ENCODE measurements at regions of chr16 and their contacts with region 1.

Region 1: DNA sequence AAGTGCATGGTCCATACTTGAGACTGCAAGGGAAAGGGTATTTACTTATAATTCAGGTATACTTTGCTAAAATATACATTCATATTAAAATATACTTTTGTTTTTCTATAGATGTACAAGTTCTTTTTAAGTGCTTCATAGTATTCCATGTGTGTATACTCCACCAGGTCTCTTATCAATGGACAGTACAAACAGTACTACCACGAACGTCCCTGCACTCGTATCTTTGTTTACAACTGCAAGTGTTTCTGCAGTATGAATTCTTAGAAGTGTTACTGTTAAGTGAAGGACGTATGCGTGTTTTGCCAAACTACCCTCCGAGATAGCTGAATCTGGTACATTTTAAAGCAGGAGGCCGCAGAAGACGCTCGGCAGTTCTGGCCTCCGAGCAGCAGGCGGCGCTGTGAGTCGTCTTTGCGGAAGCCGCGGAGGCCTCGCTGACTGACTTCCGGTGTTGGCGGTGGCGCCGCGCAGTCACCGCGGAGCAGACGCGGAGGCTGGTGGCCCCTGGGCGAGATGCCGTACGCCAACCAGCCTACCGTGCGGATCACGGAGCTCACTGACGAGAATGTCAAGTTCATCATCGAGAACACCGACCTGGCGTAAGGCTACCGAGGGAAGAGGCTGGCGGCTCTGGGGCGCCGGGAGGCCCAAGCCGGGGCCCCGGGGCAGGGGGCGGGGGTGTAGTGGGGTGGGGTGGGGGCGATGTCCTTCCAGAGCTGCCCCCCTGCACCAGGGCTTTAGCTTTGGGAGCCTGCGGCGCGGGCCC is at the start of gene POLR2C:
- DNase-seq: peak; percentile 93 to 96 (median 96)
- H3K4me3 ChIP-seq: peak within 1 kb of the TSS; percentile 48 to 94 (median 83)
- H3K27ac ChIP-seq: peak within 1 kb of the TSS; percentile 35 to 81
- H3K4me1 ChIP-seq: peaks cover 3 to 11% (median 10%) of the 10 kb centered on the region in 4 experiments
- H3K27me3 ChIP-seq: no peaks in the 10 kb centered on the region

Region 2: GRCh38 chr16:57403965-57404817 is 58.2 kb before region 1 on chr16 and contains the start of gene CCL17:
- CTCF ChIA-PET with region 1: no interaction called
- POLR2A ChIA-PET with region 1: no interaction called
- DNase-seq: peak in 1 of 3 donors; percentile 21
- H3K4me3 ChIP-seq: no peak within 1 kb of the TSS
- H3K27ac ChIP-seq: no peak within 1 kb of the TSS
- H3K4me1 ChIP-seq: peaks cover 0 to 8% (median 3%) of the 10 kb centered on the region in 4 experiments
- H3K27me3 ChIP-seq: peaks cover 0 to 4% (median 2%) of the 10 kb centered on the region in 5 experiments

Region 3: DNA sequence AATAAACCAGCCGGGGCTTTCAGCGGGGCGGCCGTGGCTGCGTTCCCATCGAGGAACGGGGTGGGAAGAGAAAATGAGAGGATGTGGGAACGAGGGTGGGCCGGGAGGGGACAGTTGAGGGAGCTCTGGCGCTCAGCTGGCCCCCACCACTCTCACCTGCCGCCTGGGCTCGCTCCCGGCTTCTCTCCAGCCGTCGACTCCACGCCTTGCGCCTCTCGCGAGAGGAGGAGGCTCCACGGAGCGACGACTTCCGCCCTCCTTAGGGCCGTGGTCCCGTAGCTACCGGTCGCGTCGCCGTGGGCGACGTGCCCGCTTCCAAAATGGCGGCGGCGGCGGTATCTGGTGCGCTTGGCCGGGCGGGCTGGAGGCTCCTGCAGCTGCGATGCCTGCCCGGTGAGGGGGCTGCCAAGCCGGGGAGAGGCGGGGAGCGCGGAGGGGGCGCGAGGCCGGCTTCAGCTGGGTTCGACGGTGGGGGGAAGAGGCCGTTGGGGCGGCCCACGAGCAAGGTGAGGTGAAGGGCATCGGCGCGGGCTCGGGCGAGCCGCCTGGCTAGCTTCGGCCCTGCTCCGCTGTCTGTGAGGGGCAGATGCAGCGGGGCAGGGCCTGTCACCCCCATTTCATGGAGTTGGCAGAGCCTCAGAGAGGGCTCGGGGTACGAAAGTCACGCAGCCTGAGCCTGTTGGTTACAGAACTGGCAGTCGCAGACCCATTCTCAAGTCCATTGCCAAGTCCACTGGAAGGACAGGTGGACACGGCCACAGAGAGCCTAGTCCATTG is 15.0 kb before region 1 on chr16 and contains the starts of genes CIAPIN1 and COQ9:
- CTCF ChIA-PET with region 1: interaction called, 41 read pairs
- POLR2A ChIA-PET with region 1: interaction called, 3 read pairs
- DNase-seq: peak; percentile 93 to 95 (median 95)
- H3K4me3 ChIP-seq: peak within 1 kb of the TSS; percentile 77 to 98 (median 93)
- H3K27ac ChIP-seq: peak within 1 kb of the TSS; percentile 85 to 92
- H3K4me1 ChIP-seq: peaks cover 8 to 19% (median 18%) of the 10 kb centered on the region in 4 experiments
- H3K27me3 ChIP-seq: no peaks in the 10 kb centered on the region

Region 4: GRCh38 chr16:57475711-57476339 is 13.4 kb after region 1 on chr16:
- CTCF ChIA-PET with region 1: interaction called, 19 read pairs
- POLR2A ChIA-PET with region 1: interaction called, 5 read pairs
- DNase-seq: peak; percentile 96 to 99 (median 98)
- H3K4me3 ChIP-seq: peak overlapping the region in 2 of 7 experiments; percentile 20 to 49
- H3K27ac ChIP-seq: no peak overlapping the region
- H3K4me1 ChIP-seq: peaks cover 0 to 77% (median 75%) of the 10 kb centered on the region in 4 experiments
- H3K27me3 ChIP-seq: no peaks in the 10 kb centered on the region

Region 5: DNA sequence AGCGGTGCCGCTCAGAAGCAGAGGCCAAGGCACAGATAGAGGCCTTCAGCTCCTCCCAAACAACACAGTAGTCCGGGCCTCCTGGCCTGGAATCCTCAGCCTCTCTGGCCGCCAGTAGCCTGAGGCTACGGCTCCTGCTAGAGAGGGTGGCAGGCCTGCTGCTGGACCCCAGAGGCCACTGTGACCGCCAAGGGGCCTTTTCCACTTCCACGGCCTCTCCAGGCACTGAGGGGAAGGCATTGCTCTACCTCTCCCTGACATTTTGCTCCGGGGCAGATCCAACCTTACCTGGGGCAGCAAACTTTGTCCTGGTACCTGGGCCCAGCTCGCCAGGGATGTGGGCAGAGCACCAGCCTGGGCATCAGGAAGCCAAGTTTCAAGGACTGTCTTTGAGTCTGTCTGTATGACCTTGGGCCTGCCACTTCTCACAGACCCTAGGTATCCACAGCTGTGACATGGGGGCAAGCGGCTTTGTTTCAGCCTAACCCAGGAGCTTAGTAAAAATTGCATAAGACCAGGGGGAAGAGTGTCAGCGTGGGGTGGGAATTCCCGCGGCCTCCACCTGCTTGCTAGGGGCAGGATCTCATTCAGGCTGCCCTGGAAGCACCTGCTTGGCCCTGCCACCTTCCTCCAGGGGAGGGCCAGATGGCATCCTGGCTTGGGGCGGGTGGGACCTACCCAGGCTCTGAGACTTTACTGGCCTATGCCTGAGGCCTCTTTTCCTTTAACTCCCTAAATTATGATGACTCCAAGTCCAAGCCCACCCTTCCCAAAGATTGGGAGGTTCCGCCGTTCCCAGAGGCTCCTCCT is 113.3 kb after region 1 on chr16:
- CTCF ChIA-PET with region 1: no interaction called
- POLR2A ChIA-PET with region 1: no interaction called
- DNase-seq: no peak
- H3K4me3 ChIP-seq: no peak overlapping the region
- H3K27ac ChIP-seq: no peak overlapping the region
- H3K4me1 ChIP-seq: peaks cover 0 to 48% (median 31%) of the 10 kb centered on the region in 4 experiments
- H3K27me3 ChIP-seq: no peaks in the 10 kb centered on the region

Region 6: DNA sequence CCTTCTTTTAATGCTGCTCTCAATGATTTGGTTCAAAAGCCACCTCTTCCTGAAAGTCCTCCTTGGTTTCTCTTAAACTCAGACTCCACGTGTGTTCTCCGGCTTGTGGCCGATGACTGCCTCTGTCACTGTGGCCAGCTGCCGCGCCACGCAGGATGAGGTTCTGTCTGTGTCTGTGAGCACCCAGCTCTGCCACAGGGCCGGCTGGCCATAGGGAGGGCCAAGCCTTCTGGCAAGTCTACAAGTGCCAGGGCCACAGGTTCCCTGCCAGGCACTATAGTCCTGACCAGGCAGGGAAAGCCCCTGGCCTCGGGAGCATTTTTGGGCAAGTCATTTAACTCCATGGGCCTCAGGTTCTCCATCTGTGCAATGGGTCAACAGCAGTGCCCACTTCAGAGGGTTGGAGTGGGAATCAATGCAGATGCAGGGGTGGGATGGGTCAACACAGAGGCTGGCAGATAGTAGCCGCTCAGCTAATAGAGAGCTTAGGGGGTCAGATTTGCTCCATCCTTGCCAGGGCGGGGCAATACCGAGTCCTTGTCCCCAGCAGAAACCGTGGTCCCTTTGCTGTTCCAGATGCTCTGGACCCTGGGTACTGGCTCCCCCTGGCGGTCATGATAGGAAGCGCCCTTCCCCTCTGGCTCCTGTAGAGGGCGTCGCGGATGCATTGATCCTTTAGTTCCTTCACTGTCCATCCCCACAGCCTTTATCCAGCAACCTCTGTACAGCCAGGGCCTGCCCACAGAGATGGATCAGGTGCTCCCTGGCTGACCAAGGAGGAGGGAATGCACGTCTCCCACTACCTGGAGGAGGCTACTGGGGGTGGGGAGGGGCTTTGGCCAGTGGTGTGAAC is 186.4 kb after region 1 on chr16:
- CTCF ChIA-PET with region 1: no interaction called
- POLR2A ChIA-PET with region 1: no interaction called
- DNase-seq: peak; percentile 76 to 90 (median 88)
- H3K4me3 ChIP-seq: no peak overlapping the region
- H3K27ac ChIP-seq: no peak overlapping the region
- H3K4me1 ChIP-seq: peaks cover 7 to 85% (median 70%) of the 10 kb centered on the region in 4 experiments
- H3K27me3 ChIP-seq: no peaks in the 10 kb centered on the region

Measured in common myeloid progenitor, CD34-positive (primary cell).